Upper lobe of right lung (tissue), 1 donor: ENCODE measurements at regions of chr9 and their contacts with region 1.

Region 1: DNA sequence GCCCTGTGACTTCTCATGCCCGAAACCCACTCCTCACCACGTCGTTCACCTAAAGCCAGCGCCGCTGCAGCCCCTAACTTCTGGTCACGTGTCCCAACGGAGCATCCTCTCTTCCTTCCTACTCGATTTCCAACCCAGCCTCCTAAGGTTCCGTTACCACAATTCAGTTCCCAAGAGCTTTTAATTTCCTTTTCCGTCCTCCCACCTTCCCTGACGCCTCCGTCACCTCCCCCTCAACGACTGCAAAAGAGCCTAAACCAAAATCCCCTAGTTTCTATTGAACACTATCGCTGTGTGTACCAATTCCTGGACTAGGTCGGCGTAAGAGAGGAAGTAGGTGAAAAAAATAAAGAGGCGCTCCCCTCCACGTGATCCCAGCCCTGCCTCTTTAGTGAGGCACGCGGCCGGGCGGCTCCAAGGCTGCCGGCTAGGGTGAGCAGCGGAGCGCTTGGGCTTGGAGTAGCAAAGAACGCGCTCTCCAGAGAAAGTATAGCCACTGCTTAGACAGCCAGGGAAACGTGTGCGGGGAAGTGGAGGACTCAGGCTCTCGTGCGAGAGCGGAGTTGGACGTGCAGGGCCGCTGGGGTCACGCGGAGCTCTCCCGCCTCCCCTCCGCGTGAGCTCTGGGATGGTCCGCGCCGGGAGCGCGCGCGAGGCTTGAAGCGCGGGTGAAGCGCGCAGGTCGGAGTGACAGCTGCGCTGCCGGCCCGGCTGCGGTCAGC is at the starts of genes CENPP and NOL8:
- DNase-seq: peak; percentile 92
- ATAC-seq: peak; percentile 97
- H3K4me3 ChIP-seq: peak within 1 kb of the TSS; percentile 67
- H3K27ac ChIP-seq: peak within 1 kb of the TSS; percentile 99
- H3K4me1 ChIP-seq: peaks cover 20% of the 10 kb centered on the region
- H3K27me3 ChIP-seq: no peaks in the 10 kb centered on the region
- CTCF ChIP-seq: no peak
- total RNA-seq, gene CENPP: 4.0 TPM
- total RNA-seq, gene NOL8: 34.2 TPM

Region 2: GRCh38 chr9:92147030-92147851 is 178.2 kb before region 1 on chr9:
- intact Hi-C with region 1: no loop called
- DNase-seq: peak; percentile 80
- ATAC-seq: peak; percentile 87
- H3K4me3 ChIP-seq: no peak overlapping the region
- H3K27ac ChIP-seq: peak overlapping the region; percentile 79
- H3K4me1 ChIP-seq: peaks cover 16% of the 10 kb centered on the region
- H3K27me3 ChIP-seq: no peaks in the 10 kb centered on the region
- CTCF ChIP-seq: no peak

Region 3: DNA sequence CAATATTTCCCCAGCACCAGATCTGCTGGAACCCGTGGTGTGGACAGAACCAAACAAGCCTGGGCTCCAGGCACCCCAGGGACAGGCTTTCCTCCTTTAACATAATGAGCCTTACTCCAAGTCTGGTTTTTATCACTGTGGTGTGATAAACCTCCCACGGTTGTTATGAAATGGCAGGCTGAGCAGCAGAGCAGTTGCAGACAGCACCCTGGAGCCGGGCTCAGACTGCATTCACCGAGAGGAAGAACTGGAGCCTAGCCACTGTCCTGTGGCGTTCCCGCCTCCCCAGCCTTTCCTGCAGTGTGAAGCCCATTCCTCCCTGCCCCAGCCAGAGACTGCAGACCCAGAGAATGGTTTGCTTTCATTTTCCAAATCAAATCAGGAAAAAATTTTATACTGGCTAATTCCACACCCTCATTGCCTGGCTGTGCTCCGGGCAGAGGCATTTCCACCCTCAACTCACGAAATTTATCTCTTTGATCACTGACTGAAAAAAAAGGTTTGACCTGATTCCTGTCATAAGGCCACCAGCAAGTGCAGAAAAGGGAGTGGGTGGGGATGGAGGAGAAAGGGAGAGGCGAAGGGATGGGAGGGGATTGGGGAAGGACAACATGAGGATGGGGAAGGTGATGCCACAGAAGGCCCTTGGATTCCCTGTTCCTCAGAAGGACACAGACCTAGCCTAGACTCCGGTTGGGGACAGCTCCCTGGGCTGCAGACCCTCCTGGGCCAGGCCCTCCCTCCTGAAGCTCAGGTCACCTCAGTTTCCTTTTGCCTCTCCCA is 325.6 kb after region 1 on chr9:
- intact Hi-C with region 1: loop called (anchors 10 kb)
- DNase-seq: peak; percentile 61
- ATAC-seq: no peak
- H3K4me3 ChIP-seq: no peak overlapping the region
- H3K27ac ChIP-seq: no peak overlapping the region
- H3K4me1 ChIP-seq: no peaks in the 10 kb centered on the region
- H3K27me3 ChIP-seq: no peaks in the 10 kb centered on the region
- CTCF ChIP-seq: no peak